GM12878 (cell line): ENCODE measurements at regions of chr6 and their contacts with region 1.

Region 1: DNA sequence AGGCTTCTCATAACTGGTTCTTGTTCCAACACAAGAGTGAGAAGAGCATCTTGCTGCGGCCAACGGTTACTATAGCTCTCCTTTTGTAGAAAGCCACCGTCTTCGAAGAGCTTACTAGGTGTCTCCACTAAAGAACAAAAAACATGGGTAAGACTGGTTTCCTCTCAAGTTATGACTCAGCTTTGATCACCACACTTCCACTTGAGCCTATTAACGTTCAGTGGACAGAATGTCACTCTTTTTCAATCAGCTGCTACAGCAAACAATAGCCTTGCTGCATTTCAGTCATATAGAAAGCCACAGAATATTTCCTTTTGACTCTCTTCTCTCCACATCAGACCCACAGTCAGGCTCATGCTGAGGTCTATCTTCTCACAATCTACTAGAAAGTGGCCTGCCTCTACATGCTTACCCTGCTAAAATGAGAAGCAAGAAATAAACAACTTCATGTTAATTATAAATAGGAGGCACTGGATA is 243.5 kb upstream of the PREP start:
- DNase-seq: peak; percentile 100
- ATAC-seq: peak; percentile 91
- H3K4me3 ChIP-seq: 0 out of 2 replicates have a peak overlapping the region, but pooled peaks have one; percentile 22
- H3K27ac ChIP-seq: peak overlapping the region; percentile 72
- H3K4me1 ChIP-seq: peaks cover 51% of the 10 kb centered on the region
- H3K27me3 ChIP-seq: no peaks in the 10 kb centered on the region; a peak in 1 of 4 replicates
- CTCF ChIP-seq: no peak
- EP300 ChIP-seq: peak; percentile 100
- POLR2A ChIP-seq: 0 out of 2 replicates have a peak, but pooled peaks have one; percentile 25
- RAD21 ChIP-seq: peak; percentile 32; the same call in 1 of the 2 replicates

Region 2: DNA sequence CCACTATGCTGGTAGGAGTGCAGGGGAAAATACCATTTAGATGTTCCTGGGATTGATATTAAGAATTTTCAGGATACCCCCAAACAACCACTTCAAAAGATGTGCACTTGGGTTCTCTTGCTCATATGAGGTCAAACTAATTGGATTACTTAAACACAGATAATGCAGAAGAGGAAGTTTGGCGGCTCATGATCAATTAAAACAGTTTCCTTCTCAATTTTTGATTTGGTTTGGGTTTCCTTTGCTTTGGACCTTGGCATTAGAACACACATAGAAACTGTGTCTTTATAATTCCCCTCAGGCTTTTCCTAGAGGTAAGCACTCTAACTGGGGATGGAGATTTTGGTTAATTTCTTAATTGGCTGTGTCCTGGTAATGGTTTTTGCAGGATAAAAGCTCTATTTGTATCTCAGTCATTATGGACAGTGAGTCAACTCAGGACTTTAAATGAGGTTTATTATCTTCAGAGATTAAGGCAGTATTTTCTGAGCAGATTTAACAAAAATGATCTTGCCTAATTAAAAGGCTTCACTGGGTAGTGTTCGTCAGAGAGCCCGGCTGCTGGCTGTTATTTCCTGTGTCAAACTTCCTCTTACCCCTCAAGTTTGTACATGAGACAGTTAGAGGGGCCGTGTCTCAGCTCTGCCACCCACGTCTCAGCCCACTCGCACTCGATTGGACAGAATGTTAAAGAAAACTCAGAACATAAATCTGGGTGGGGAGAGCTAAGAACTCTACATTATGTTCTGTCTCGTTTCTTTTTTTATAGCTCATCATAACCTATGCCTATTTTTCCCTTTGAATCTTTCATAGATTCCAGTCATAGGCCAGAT is 193.3 kb before region 1 on chr6:
- CTCF ChIA-PET with region 1: interaction called, 8 read pairs
- POLR2A ChIA-PET with region 1: interaction called, 11 read pairs
- RAD21 ChIA-PET with region 1: interaction called, 24 read pairs
- SMC1A ChIA-PET with region 1: interaction called, 90 read pairs
- in situ Hi-C with region 1: no loop called
- intact Hi-C with region 1: no loop called
- DNase-seq: peak; percentile 54
- ATAC-seq: peak; percentile 89
- H3K4me3 ChIP-seq: no peak overlapping the region
- H3K27ac ChIP-seq: peak overlapping the region; percentile 35
- H3K4me1 ChIP-seq: peaks cover 15% of the 10 kb centered on the region
- H3K27me3 ChIP-seq: no peaks in the 10 kb centered on the region
- CTCF ChIP-seq: no peak
- EP300 ChIP-seq: peak; percentile 49 to 63; a peak in 3 of 4 replicates
- POLR2A ChIP-seq: no peak
- RAD21 ChIP-seq: no peak

Region 3: GRCh38 chr6:105492706-105493673 is 153.4 kb before region 1 on chr6:
- CTCF ChIA-PET with region 1: interaction called, 28 read pairs
- POLR2A ChIA-PET with region 1: interaction called, 6 read pairs
- RAD21 ChIA-PET with region 1: interaction called, 72 read pairs
- SMC1A ChIA-PET with region 1: interaction called, 115 read pairs
- in situ Hi-C with region 1: loop called (anchors 5 kb)
- intact Hi-C with region 1: no loop called
- DNase-seq: no peak
- ATAC-seq: peak; percentile 83
- H3K4me3 ChIP-seq: no peak overlapping the region
- H3K27ac ChIP-seq: peak overlapping the region; percentile 27
- H3K4me1 ChIP-seq: peaks cover 47% of the 10 kb centered on the region
- H3K27me3 ChIP-seq: no peaks in the 10 kb centered on the region
- CTCF ChIP-seq: no peak
- EP300 ChIP-seq: no peak; a peak in 1 of 4 replicates
- POLR2A ChIP-seq: no peak
- RAD21 ChIP-seq: no peak

Region 4: GRCh38 chr6:105533301-105533700 is 113.1 kb before region 1 on chr6:
- CTCF ChIA-PET with region 1: no interaction called
- POLR2A ChIA-PET with region 1: no interaction called
- RAD21 ChIA-PET with region 1: no interaction called
- SMC1A ChIA-PET with region 1: no interaction called
- in situ Hi-C with region 1: no loop called
- intact Hi-C with region 1: no loop called
- DNase-seq: no peak
- ATAC-seq: no peak
- H3K4me3 ChIP-seq: no peak overlapping the region
- H3K27ac ChIP-seq: no peak overlapping the region
- H3K4me1 ChIP-seq: no peaks in the 10 kb centered on the region
- H3K27me3 ChIP-seq: no peaks in the 10 kb centered on the region
- CTCF ChIP-seq: no peak
- EP300 ChIP-seq: no peak
- POLR2A ChIP-seq: no peak
- RAD21 ChIP-seq: no peak

Region 5: DNA sequence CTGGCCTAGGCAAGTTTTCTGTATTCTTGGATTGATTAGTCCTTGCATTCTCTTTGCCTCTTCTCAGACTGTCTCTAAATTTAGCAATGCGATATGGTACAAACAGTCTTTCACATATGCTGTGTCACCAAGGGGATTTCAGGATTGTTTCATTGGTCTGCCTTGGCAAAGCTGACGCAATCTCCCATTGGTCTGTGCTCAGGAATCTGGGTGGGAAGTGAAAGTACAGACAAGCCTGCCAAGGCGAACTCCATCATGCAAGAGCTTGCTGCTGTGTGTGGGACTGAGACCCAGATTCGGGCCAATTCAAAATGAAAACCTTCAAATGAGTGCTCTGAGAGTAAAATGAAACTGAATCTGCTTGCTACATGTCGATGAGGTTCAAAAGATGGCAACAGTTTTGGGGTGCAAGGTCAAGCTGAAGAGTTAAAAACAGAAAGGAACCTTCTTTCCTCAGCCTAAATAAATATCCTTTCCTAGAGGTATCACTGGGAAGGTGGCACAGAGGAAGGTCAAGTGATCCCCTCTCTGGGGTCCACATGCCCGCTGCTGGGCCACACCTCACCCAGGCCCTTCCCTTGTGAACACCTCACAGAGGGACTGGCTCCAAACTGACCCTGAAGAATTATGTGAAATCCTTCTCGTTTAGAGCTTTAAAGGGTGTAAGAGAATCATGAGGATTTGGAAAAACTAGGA is 44.7 kb before region 1 on chr6:
- CTCF ChIA-PET with region 1: interaction called, 14 read pairs
- POLR2A ChIA-PET with region 1: interaction called, 9 read pairs
- RAD21 ChIA-PET with region 1: interaction called, 58 read pairs
- SMC1A ChIA-PET with region 1: interaction called, 40 read pairs
- in situ Hi-C with region 1: no loop called
- intact Hi-C with region 1: loop called (anchors 1 kb)
- DNase-seq: peak; percentile 99
- ATAC-seq: peak; percentile 92
- H3K4me3 ChIP-seq: peak overlapping the region; percentile 53; the same call in 1 of the 2 replicates
- H3K27ac ChIP-seq: peak overlapping the region; percentile 86
- H3K4me1 ChIP-seq: peaks cover 24% of the 10 kb centered on the region
- H3K27me3 ChIP-seq: no peaks in the 10 kb centered on the region
- CTCF ChIP-seq: no peak
- EP300 ChIP-seq: peak; percentile 59 to 86; a peak in 3 of 4 replicates
- POLR2A ChIP-seq: peak; percentile 50
- RAD21 ChIP-seq: peak; percentile 12; the same call in 1 of the 2 replicates

Region 6: GRCh38 chr6:105733565-105734162 is 87.2 kb after region 1 on chr6:
- CTCF ChIA-PET with region 1: interaction called, 4 read pairs
- POLR2A ChIA-PET with region 1: no interaction called
- RAD21 ChIA-PET with region 1: interaction called, 5 read pairs
- SMC1A ChIA-PET with region 1: interaction called, 15 read pairs
- in situ Hi-C with region 1: no loop called
- intact Hi-C with region 1: loop called (anchors 5 kb)
- DNase-seq: no peak
- ATAC-seq: peak; percentile 41; the same call in 1 of the 3 replicates
- H3K4me3 ChIP-seq: no peak overlapping the region
- H3K27ac ChIP-seq: no peak overlapping the region
- H3K4me1 ChIP-seq: no peaks in the 10 kb centered on the region
- H3K27me3 ChIP-seq: no peaks in the 10 kb centered on the region
- CTCF ChIP-seq: peak; percentile 48 to 52 (median 50); a peak in 5 of 6 replicates
- EP300 ChIP-seq: no peak
- POLR2A ChIP-seq: no peak
- RAD21 ChIP-seq: peak; percentile 56

Region 7: DNA sequence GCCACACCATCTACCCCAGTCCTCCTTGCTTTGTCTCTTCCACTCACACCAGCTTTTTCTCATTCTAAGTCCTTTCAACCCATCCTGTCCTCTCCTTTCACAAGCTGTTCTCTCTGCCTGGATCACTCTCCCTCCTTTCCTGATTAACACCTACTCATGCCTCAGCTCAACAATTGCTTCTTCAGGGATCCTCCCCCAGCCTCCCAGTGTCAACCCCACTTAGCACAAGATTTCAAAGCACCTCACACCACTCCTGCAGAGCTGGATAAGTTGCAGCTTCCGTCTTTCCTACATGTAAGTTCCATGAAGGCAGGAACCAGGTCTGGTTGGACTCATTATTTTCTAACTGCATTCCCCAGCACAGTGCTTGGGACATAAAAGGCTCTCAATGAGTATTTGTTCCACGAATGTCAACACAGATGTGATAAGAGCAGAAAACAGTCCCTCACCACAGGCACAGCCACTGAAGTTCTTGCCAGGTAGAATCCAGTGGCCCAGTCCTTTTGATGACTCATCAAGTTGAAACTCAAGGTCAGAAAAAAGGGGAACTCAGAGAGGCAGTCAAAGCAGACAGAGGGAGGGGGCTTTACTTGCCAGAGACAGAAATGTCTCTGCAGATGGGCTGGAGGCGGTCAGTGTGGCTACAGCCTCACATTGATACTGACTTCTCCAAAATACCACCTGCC is 246.3 kb after region 1 on chr6:
- CTCF ChIA-PET with region 1: no interaction called
- POLR2A ChIA-PET with region 1: no interaction called
- RAD21 ChIA-PET with region 1: no interaction called
- SMC1A ChIA-PET with region 1: interaction called, 4 read pairs
- in situ Hi-C with region 1: no loop called
- intact Hi-C with region 1: loop called (anchors 2 kb)
- DNase-seq: peak; percentile 74
- ATAC-seq: peak; percentile 97
- H3K4me3 ChIP-seq: no peak overlapping the region
- H3K27ac ChIP-seq: no peak overlapping the region; the same call in 1 of the 2 replicates
- H3K4me1 ChIP-seq: peaks cover 12% of the 10 kb centered on the region
- H3K27me3 ChIP-seq: no peaks in the 10 kb centered on the region; a peak in 1 of 4 replicates
- CTCF ChIP-seq: no peak
- EP300 ChIP-seq: peak; percentile 66 to 85; a peak in 3 of 4 replicates
- POLR2A ChIP-seq: no peak
- RAD21 ChIP-seq: no peak

Region 8: GRCh38 chr6:106163446-106163965 is 517.1 kb after region 1 on chr6:
- CTCF ChIA-PET with region 1: interaction called, 3 read pairs
- POLR2A ChIA-PET with region 1: no interaction called
- RAD21 ChIA-PET with region 1: interaction called, 3 read pairs
- SMC1A ChIA-PET with region 1: interaction called, 3 read pairs
- in situ Hi-C with region 1: no loop called
- intact Hi-C with region 1: loop called (anchors 2 kb)
- DNase-seq: peak; percentile 69
- ATAC-seq: peak; percentile 52
- H3K4me3 ChIP-seq: peak overlapping the region; percentile 13; the same call in 1 of the 2 replicates
- H3K27ac ChIP-seq: peak overlapping the region; percentile 97
- H3K4me1 ChIP-seq: peaks cover 64% of the 10 kb centered on the region
- H3K27me3 ChIP-seq: no peaks in the 10 kb centered on the region
- CTCF ChIP-seq: peak in 2 of 3 experiments; percentile 22 to 23; a peak in 2 of 6 replicates
- EP300 ChIP-seq: no peak
- POLR2A ChIP-seq: no peak
- RAD21 ChIP-seq: no peak

Region 9: DNA sequence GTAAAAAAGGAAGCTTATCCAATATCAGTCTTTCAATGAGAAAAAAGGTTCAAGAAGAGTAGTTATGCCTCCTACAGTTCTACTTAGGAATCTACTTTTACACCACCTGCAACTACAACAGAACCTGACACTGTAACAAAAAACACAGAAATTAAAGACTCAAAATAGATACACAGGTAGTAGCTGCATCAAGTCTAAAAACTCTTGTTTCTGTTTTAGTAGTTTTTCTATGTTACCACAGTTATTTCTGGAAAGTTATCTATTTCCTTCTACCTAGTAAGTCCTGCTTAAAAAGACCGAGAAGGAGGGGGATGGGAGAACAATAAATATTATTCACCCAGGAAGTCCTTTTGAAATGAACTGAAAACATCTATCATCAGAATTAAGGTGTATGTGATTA is 626.7 kb after region 1 on chr6:
- CTCF ChIA-PET with region 1: no interaction called
- POLR2A ChIA-PET with region 1: no interaction called
- RAD21 ChIA-PET with region 1: no interaction called
- SMC1A ChIA-PET with region 1: no interaction called
- in situ Hi-C with region 1: no loop called
- intact Hi-C with region 1: no loop called
- DNase-seq: peak; percentile 4
- ATAC-seq: peak; percentile 61
- H3K4me3 ChIP-seq: no peak overlapping the region
- H3K27ac ChIP-seq: no peak overlapping the region
- H3K4me1 ChIP-seq: peaks cover 23% of the 10 kb centered on the region
- H3K27me3 ChIP-seq: no peaks in the 10 kb centered on the region
- CTCF ChIP-seq: 0 out of 6 replicates have a peak, but pooled peaks of 2 of the 3 experiments have one; percentile 6 to 20
- EP300 ChIP-seq: no peak
- POLR2A ChIP-seq: no peak
- RAD21 ChIP-seq: peak; percentile 28; the same call in 1 of the 2 replicates